ENCODE measurements at regions of chr16 and their contacts with region 1.

Region 1: GRCh38 chr16:66934153-66934838 is at the start of gene CIAO2B:
- DNase-seq: peak; percentile 98
- H3K4me3 Mint-ChIP-seq: peak within 1 kb of the TSS; percentile 99
- H3K27ac Mint-ChIP-seq: peak within 1 kb of the TSS; percentile 98
- H3K4me1 Mint-ChIP-seq: peaks cover 43% of the 10 kb centered on the region
- H3K27me3 Mint-ChIP-seq: no peaks in the 10 kb centered on the region
- total RNA-seq, gene CIAO2B: 170 and 176 TPM in 2 replicates

Region 2: DNA sequence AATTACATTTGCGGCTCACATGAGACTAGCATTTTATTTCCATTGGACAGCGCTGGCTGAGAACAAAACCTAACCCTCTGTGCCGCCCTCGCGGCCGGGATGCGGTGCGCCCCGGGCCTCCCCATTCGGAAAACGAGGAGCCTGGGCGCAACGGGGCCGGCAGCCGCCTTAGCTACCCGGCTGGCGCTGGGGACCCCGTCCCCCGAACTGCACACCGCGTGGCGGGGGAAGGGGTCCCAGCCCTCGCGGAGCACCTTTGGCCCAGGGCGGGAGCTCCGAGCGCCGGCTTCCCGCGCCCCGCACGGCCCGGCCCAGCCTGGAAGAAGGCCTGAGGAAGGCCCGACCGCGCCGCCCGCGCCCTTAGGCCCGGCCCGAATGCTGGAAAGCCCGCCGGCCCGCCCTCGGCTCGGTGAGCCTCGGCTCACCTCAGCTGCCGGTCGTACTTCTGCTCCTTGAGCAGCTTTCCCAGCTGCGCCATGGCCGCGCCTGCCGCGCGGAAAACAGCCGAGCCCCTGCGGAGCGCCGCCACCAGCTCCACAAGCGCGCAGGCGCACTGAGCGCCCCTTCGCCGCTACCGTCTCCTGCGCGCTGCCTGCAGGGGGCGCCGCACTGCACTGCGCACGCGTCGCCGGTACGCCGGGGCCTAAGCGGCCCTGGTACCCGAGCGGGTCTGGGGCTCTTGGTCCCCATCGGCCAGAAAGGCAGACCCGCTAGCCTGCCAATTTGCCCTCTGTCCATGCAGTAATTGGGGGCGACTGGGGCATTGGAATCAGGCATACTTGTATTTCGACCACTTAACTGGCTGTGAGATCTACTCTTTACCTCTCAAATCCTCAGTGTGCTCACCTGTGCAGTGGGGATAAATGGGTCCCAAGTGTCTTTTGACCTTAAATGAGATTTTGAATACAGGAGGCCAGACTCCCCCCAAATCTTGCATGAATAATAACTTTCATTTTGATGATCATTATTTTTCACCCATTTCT is 103.6 kb before region 1 on chr16 and contains the start of gene NAE1:
- intact Hi-C with region 1: loop called (anchors 2 kb)
- DNase-seq: peak; percentile 98
- H3K4me3 Mint-ChIP-seq: peak within 1 kb of the TSS; percentile 78
- H3K27ac Mint-ChIP-seq: peak within 1 kb of the TSS; percentile 85
- H3K4me1 Mint-ChIP-seq: peaks cover 30% of the 10 kb centered on the region
- H3K27me3 Mint-ChIP-seq: peaks cover 1% of the 10 kb centered on the region
- total RNA-seq, gene NAE1: 118 and 125 TPM in 2 replicates